CD4-positive, alpha-beta memory T cell (primary cell): ENCODE measurements at regions of chr22 and their contacts with region 1.

Region 1: GRCh38 chr22:38353142-38353629 is 36.0 kb upstream of the CSNK1E start:
- DNase-seq: peak; percentile 57 to 74 (median 59)
- H3K4me3 ChIP-seq: no peak overlapping the region
- H3K4me3 Mint-ChIP-seq: no peak overlapping the region
- H3K27ac ChIP-seq: no peak overlapping the region
- H3K27ac Mint-ChIP-seq: no peak overlapping the region
- H3K4me1 ChIP-seq: no peaks in the 10 kb centered on the region
- H3K4me1 Mint-ChIP-seq: no peaks in the 10 kb centered on the region
- H3K27me3 ChIP-seq: no peaks in the 10 kb centered on the region
- H3K27me3 Mint-ChIP-seq: no peaks in the 10 kb centered on the region

Region 2: DNA sequence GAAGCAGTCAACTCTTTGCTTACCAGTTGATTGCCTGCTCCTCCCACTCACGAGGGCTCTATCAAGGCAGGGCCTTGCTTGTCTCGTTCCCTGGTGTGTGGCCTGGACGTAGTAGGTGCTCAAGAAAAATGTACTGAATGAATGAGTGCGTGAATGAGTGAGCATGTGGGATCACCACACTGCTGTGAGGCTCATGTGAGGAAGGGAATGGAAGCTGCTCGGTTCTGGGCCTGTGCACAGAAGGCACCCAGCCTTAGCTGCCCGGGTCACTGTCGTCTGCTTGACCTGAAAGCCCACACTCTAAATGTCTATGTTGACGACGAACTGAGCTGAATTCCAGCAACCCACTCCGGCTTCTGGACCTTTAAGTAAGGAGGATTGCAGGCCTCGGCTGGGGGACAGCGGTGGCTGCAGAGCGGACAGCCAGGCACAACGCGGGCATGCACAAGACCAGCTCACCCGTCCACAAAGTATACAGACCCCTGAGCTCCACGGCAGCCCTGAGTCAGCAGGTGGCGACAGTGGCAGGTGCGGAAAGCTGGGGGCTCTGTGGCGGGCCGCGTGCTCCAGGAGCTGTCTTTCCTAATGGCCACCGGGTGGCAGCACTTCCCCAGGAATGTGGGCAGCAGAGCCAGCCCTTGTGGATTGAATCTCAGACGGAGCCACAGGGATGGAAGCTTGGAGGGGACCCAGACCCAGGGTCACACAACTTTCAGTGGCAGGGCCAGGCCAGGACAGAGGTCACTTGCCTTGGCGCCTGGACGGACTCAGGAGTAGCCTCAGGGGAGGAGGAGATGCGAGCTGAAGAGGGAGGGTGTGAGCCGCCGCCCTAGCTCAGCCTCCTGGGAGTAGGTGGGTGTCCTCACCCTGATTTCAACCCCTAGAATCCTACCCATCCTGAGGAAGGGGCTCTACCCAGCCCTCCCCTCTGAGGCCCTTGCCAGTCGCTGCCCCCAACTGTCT is 301.0 kb before region 1 on chr22:
- CTCF ChIA-PET with region 1: interaction called, 27 read pairs
- POLR2A ChIA-PET with region 1: no interaction called
- intact Hi-C with region 1: no loop called
- DNase-seq: peak; percentile 68 to 73 (median 71)
- H3K4me3 ChIP-seq: no peak overlapping the region
- H3K4me3 Mint-ChIP-seq: no peak overlapping the region
- H3K27ac ChIP-seq: no peak overlapping the region
- H3K27ac Mint-ChIP-seq: peak overlapping the region in 4 of 7 donors; percentile 18 to 82 (median 64)
- H3K4me1 ChIP-seq: peaks cover 10% of the 10 kb centered on the region
- H3K4me1 Mint-ChIP-seq: peaks cover 3 to 18% (median 11%) of the 10 kb centered on the region in 4 donors
- H3K27me3 ChIP-seq: no peaks in the 10 kb centered on the region
- H3K27me3 Mint-ChIP-seq: peaks cover 0 to 3% of the 10 kb centered on the region in 2 donors

Region 3: DNA sequence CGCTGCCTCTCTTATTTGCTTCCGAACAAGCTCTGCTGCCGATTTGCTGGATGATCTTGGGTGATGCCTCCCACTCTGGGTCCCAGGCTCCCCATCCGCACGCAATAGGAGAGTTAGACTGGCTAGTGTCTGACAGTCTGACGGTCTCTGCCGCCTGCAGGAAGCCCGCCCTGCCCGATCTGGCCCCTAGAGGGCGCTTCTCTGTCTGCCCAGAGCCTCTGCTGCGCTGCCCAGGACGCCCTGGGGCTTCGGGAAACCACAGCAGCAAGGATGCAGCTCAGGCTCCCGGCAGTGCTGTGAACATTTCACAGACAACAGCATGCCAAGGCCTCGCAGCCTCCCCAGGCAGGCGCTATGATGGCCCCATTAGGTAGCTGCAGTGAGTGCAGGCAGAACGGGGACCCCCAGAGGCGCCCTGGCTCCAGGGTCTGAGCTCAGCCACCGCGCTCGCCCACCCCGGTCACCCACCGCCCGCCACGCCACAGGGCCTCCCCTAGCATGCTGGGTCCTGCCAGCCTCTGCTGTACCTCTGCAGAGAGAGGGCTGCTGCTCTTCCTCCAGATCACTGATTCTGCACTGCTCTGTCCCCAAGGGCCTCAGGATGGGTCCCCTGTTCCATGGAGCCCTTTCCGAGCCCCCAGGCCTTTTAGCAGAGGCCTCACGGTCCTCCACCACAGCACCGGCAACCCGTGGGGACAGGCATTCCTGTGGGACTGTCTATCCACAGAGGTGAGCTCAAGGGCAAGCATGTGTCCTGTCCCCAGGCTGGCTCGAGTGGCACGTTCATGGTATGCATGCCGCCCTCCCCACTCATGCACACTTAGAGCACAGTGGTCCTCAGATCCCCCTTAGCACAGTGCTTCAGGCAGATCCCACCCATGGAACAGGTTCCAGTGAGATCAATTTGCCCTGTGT is 238.4 kb before region 1 on chr22:
- CTCF ChIA-PET with region 1: interaction called, 5 read pairs
- POLR2A ChIA-PET with region 1: no interaction called
- intact Hi-C with region 1: loop called (anchors 10 kb)
- DNase-seq: peak; percentile 65 to 73 (median 70)
- H3K4me3 ChIP-seq: no peak overlapping the region
- H3K4me3 Mint-ChIP-seq: peak overlapping the region in 2 of 8 donors; percentile 57 to 74
- H3K27ac ChIP-seq: no peak overlapping the region
- H3K27ac Mint-ChIP-seq: peak overlapping the region in 4 of 7 donors; percentile 64 to 89 (median 83)
- H3K4me1 ChIP-seq: peaks cover 6% of the 10 kb centered on the region
- H3K4me1 Mint-ChIP-seq: peaks cover 2 to 5% (median 3%) of the 10 kb centered on the region in 4 donors
- H3K27me3 ChIP-seq: no peaks in the 10 kb centered on the region
- H3K27me3 Mint-ChIP-seq: no peaks in the 10 kb centered on the region

Region 4: DNA sequence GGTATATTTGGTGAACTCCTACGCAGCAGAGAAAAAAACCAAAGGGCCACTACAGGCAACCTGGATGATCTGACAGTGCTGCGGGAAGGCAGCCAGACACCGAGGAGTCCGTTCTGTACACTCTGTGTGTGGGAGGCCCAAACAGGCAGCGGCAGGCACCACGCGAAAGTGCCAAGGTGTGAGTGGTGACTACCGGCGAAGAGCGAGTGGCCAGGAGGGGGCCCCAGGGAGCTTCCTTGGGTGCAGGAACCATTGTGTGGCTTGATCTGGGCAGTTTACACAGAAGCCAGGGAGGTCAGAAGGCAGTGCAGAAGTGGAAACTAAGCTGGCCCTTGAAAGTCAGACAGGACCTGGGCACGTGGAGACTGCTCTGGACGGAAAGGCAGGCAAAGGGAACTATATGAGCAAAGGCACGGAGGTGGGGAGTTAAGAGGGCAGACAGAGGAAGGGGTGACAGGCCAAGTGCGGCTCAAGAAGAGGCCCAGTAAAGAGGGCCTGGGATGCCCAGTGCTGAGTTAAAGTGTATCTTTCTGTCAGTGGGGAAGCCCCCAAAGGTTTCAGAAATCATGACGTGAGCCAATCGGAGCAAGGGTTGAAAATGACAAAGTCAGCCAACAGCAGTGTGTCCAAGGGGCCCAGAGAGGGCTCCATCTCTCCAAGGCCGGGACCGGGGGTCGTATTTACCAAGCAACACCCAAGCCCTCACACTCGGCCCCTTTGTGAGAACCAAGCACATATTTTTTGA is 91.0 kb before region 1 on chr22:
- CTCF ChIA-PET with region 1: interaction called, 4 read pairs
- POLR2A ChIA-PET with region 1: no interaction called
- intact Hi-C with region 1: loop called (anchors 1 kb)
- DNase-seq: peak in 4 of 5 donors; percentile 30 to 41 (median 36)
- H3K4me3 ChIP-seq: no peak overlapping the region
- H3K4me3 Mint-ChIP-seq: peak overlapping the region in 4 of 8 donors; percentile 51 to 59 (median 56)
- H3K27ac ChIP-seq: no peak overlapping the region
- H3K27ac Mint-ChIP-seq: peak overlapping the region; percentile 30 to 93 (median 65)
- H3K4me1 ChIP-seq: peaks cover 33% of the 10 kb centered on the region
- H3K4me1 Mint-ChIP-seq: peaks cover 27 to 69% (median 42%) of the 10 kb centered on the region in 4 donors
- H3K27me3 ChIP-seq: no peaks in the 10 kb centered on the region
- H3K27me3 Mint-ChIP-seq: no peaks in the 10 kb centered on the region